ENCODE measurements at regions of chr5 and their contacts with region 1.

Region 1: DNA sequence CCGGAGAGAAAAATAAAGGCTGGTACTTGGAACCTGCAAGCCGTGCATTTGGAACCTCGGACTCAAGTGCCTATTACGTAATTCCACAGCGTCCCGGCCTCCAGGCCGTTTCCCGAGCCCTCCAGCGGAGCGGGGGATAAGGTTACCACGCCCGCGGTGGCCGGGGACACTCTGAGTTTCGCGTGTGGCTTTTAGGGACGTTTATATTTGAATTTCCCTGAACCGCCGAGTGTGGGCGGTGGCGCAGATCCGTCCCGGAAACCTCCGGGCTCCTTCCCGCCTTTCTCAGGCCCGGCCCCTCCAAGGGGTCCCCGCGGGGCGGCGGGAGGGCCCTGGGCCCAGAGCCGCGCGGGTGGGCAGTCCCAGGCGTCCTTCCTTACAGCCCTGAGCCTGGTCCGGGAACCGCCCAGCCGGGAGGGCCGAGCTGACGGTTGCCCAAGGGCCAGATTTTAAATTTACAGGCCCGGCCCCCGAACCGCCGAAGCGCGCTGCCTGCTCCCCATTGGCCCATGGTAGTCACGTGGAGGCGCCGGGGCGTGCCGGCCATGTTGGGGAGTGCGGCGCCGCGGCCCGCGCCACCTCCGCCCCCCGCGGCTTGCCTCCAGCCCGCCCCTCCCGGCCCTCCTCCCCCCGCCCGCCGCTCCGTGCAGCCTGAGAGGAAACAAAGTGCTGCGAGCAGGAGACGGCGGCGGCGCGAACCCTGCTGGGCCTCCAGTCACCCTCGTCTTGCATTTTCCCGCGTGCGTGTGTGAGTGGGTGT is at the start of gene LMNB1:
- DNase-seq: peak; percentile 90 to 98 (median 94)
- ATAC-seq: peak; percentile 86
- H3K4me3 ChIP-seq: peak within 1 kb of the TSS; percentile 93
- H3K4me3 Mint-ChIP-seq: peak within 1 kb of the TSS; percentile 89 to 97 (median 96)
- H3K27ac ChIP-seq: peak within 1 kb of the TSS; percentile 97
- H3K27ac Mint-ChIP-seq: peak within 1 kb of the TSS; percentile 91 to 99 (median 95)
- H3K4me1 ChIP-seq: peaks cover 18 to 22% of the 10 kb centered on the region in 2 donors
- H3K4me1 Mint-ChIP-seq: peaks cover 6 to 31% (median 25%) of the 10 kb centered on the region in 7 donors
- H3K27me3 ChIP-seq: no peaks in the 10 kb centered on the region
- H3K27me3 Mint-ChIP-seq: no peaks in the 10 kb centered on the region
- total RNA-seq, gene LMNB1: 20.8 to 218 (median 32.6) TPM

Region 2: DNA sequence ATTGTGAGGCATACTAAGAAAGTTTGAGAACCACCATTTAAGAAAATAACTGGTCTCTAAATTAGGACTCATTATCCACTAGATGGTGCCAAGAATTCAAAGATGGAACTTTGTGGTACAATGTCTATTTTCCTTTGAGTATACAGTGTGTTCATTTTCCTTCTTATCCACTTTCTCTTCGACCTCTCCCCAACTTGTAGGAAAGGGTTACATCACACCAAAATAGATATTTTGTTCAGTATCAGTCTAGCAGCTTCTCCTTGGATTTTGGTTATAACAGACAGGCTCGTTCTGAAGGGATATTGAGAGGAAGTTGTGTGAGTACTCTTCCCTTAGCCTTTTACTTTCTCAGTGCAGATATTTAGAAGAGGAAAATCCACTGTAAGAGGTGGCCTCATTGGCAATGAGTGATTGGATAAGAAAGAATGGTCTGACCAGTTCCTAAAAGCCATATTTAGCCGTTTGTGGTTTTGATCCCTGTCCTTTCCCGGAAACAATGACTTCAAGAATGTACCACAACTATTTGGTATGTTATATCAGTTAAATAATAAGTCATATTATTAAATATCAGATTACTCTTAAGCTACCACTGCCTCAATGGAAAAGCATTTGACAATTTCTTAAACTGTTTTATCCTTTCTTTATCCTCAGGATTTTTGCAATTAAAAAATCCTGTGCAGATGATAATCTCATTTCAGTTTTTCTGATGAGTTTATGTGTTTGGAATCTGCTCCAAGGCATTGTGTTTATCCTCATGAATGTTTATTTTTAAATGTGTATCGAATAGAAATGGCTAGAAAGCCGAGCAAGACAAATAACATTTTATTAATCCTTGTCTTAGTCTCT is 422.4 kb before region 1 on chr5:
- CTCF ChIA-PET with region 1: no interaction called
- POLR2A ChIA-PET with region 1: no interaction called
- intact Hi-C with region 1: loop called in 1 of 2 experiments (anchors 5 kb)
- DNase-seq: peak in 7 of 9 donors; percentile 26 to 66 (median 53)
- ATAC-seq: peak; percentile 78
- H3K4me3 ChIP-seq: no peak overlapping the region
- H3K4me3 Mint-ChIP-seq: peak overlapping the region; percentile 12 to 80 (median 72)
- H3K27ac ChIP-seq: no peak overlapping the region
- H3K27ac Mint-ChIP-seq: peak overlapping the region in 7 of 9 donors; percentile 19 to 65 (median 36)
- H3K4me1 ChIP-seq: peaks cover 0 to 12% of the 10 kb centered on the region in 2 donors
- H3K4me1 Mint-ChIP-seq: peaks cover 3 to 21% (median 15%) of the 10 kb centered on the region in 7 donors
- H3K27me3 ChIP-seq: no peaks in the 10 kb centered on the region
- H3K27me3 Mint-ChIP-seq: peaks cover 0 to 16% (median 0%) of the 10 kb centered on the region in 5 donors

Region 3: DNA sequence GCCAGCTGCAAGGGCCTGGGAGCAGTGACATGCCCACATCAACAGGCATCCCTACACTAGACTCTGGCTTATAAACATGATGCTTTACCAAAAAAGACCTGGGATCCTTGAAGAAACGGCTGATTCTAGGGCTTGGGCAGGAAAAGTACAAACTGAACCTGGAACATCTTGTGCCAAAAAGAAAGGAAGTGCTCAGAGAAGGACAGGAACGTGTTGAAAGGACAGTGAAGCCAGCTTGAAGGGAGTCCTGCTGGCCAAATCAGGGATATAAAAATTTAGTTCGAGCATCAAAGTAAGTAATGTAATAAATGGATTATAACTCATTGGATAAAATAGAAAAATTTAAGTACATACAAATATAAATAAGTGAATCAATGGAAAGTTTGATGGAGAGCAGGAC is 239.8 kb before region 1 on chr5:
- CTCF ChIA-PET with region 1: no interaction called
- POLR2A ChIA-PET with region 1: no interaction called
- intact Hi-C with region 1: loop called in 1 of 2 experiments (anchors 2 kb)
- DNase-seq: no peak
- ATAC-seq: no peak
- H3K4me3 ChIP-seq: no peak overlapping the region
- H3K4me3 Mint-ChIP-seq: no peak overlapping the region
- H3K27ac ChIP-seq: no peak overlapping the region
- H3K27ac Mint-ChIP-seq: no peak overlapping the region
- H3K4me1 ChIP-seq: no peaks in the 10 kb centered on the region
- H3K4me1 Mint-ChIP-seq: peaks cover 0 to 9% (median 0%) of the 10 kb centered on the region in 7 donors
- H3K27me3 ChIP-seq: no peaks in the 10 kb centered on the region
- H3K27me3 Mint-ChIP-seq: peaks cover 0 to 6% (median 0%) of the 10 kb centered on the region in 5 donors

Region 4: GRCh38 chr5:126736141-126736540 is 40.5 kb before region 1 on chr5:
- CTCF ChIA-PET with region 1: no interaction called
- POLR2A ChIA-PET with region 1: no interaction called
- intact Hi-C with region 1: loop called in 1 of 2 experiments (anchors 5 kb)
- DNase-seq: no peak
- ATAC-seq: no peak
- H3K4me3 ChIP-seq: no peak overlapping the region
- H3K4me3 Mint-ChIP-seq: no peak overlapping the region
- H3K27ac ChIP-seq: no peak overlapping the region
- H3K27ac Mint-ChIP-seq: no peak overlapping the region
- H3K4me1 ChIP-seq: no peaks in the 10 kb centered on the region
- H3K4me1 Mint-ChIP-seq: peaks cover 0 to 1% (median 0%) of the 10 kb centered on the region in 7 donors
- H3K27me3 ChIP-seq: no peaks in the 10 kb centered on the region
- H3K27me3 Mint-ChIP-seq: peaks cover 0 to 5% (median 2%) of the 10 kb centered on the region in 5 donors

Region 5: GRCh38 chr5:126808521-126808988 is 31.9 kb after region 1 on chr5:
- CTCF ChIA-PET with region 1: interaction called, 8 read pairs
- POLR2A ChIA-PET with region 1: interaction called, 11 read pairs
- intact Hi-C with region 1: loop called (anchors 1 to 5 kb)
- DNase-seq: peak in 5 of 9 donors; percentile 17 to 37 (median 22)
- ATAC-seq: peak; percentile 52
- H3K4me3 ChIP-seq: no peak overlapping the region
- H3K4me3 Mint-ChIP-seq: no peak overlapping the region
- H3K27ac ChIP-seq: no peak overlapping the region
- H3K27ac Mint-ChIP-seq: peak overlapping the region in 4 of 9 donors; percentile 10 to 95 (median 38)
- H3K4me1 ChIP-seq: peaks cover 8 to 11% of the 10 kb centered on the region in 2 donors
- H3K4me1 Mint-ChIP-seq: peaks cover 0 to 58% (median 24%) of the 10 kb centered on the region in 7 donors
- H3K27me3 ChIP-seq: no peaks in the 10 kb centered on the region
- H3K27me3 Mint-ChIP-seq: no peaks in the 10 kb centered on the region

Region 6: GRCh38 chr5:127030259-127031146 is 253.8 kb after region 1 on chr5 and contains the start of gene MARCHF3:
- CTCF ChIA-PET with region 1: interaction called, 4 read pairs
- POLR2A ChIA-PET with region 1: interaction called, 14 read pairs
- intact Hi-C with region 1: loop called (anchors 1 kb)
- DNase-seq: peak; percentile 91 to 98 (median 94)
- ATAC-seq: peak; percentile 98
- H3K4me3 ChIP-seq: peak within 1 kb of the TSS; percentile 79
- H3K4me3 Mint-ChIP-seq: peak within 1 kb of the TSS; percentile 83 to 96 (median 92)
- H3K27ac ChIP-seq: peak within 1 kb of the TSS; percentile 78
- H3K27ac Mint-ChIP-seq: peak within 1 kb of the TSS; percentile 42 to 93 (median 82)
- H3K4me1 ChIP-seq: peaks cover 0 to 10% of the 10 kb centered on the region in 2 donors
- H3K4me1 Mint-ChIP-seq: peaks cover 17 to 38% (median 28%) of the 10 kb centered on the region in 7 donors
- H3K27me3 ChIP-seq: no peaks in the 10 kb centered on the region
- H3K27me3 Mint-ChIP-seq: peaks cover 0 to 56% (median 0%) of the 10 kb centered on the region in 5 donors
- total RNA-seq, gene MARCHF3: 3.1 to 15.4 (median 13.0) TPM

Region 7: GRCh38 chr5:127517480-127518318 is 741.0 kb after region 1 on chr5 and contains the start of gene PRRC1:
- CTCF ChIA-PET with region 1: interaction called, 3 read pairs
- POLR2A ChIA-PET with region 1: interaction called, 3 read pairs
- intact Hi-C with region 1: loop called (anchors 1 kb)
- DNase-seq: peak; percentile 63 to 80 (median 74)
- ATAC-seq: peak; percentile 99
- H3K4me3 ChIP-seq: peak within 1 kb of the TSS; percentile 94
- H3K4me3 Mint-ChIP-seq: peak within 1 kb of the TSS; percentile 87 to 92 (median 89)
- H3K27ac ChIP-seq: peak within 1 kb of the TSS; percentile 89
- H3K27ac Mint-ChIP-seq: peak within 1 kb of the TSS; percentile 48 to 91 (median 82)
- H3K4me1 ChIP-seq: peaks cover 0 to 18% of the 10 kb centered on the region in 2 donors
- H3K4me1 Mint-ChIP-seq: peaks cover 25 to 48% (median 38%) of the 10 kb centered on the region in 7 donors
- H3K27me3 ChIP-seq: no peaks in the 10 kb centered on the region
- H3K27me3 Mint-ChIP-seq: peaks cover under 1 to 7% (median 6%) of the 10 kb centered on the region in 5 donors
- total RNA-seq, gene PRRC1: 34.6 to 56.6 (median 49.4) TPM

Measured in naive thymus-derived CD4-positive, alpha-beta T cell (primary cell).